ENCODE measurements at regions of chr17 and their contacts with region 1.

Region 1: DNA sequence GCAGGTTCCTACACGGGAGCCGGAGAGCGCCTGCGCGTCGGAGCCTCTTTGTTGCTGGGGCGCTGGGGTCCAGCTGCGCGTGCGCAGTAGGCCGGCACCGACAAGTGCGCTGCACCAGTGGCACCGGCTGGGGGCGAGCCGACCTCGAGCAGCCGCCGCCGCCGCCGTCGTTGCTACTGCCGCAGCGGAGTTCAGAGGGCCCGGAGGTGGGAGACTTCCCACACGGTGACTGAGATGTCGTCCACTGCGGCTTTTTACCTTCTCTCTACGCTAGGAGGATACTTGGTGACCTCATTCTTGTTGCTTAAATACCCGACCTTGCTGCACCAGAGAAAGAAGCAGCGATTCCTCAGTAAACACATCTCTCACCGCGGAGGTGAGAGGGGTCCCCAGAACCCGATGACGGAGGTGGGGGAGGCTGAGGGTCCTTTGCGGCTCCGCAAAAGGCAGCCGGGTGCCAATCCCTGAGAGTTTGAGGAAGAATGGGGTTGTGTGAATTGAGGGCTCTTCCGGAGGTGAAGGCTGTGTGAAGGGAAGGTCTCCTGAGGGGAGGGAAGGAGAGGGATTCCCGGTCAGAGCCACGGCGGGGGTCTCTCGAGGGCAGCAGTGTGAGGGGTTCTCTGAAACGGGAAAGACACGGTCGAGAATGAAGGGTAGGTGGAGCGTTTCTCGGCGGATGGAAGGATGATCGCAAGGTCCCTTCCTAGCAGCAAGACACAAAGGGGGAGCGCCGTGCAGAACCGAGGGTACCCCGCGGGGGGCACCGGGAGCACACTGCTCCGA is at the start of gene GDPD1:
- DNase-seq: peak; percentile 89 to 99 (median 97)
- ATAC-seq: peak; percentile 97 to 100 (median 99)
- H3K4me3 ChIP-seq: peak within 1 kb of the TSS; percentile 93 to 96
- H3K4me3 Mint-ChIP-seq: peak within 1 kb of the TSS; percentile 99 to 100 (median 99)
- H3K27ac ChIP-seq: peak within 1 kb of the TSS; percentile 82
- H3K27ac Mint-ChIP-seq: peak within 1 kb of the TSS; percentile 97 to 98
- H3K4me1 ChIP-seq: peaks cover 8 to 9% of the 10 kb centered on the region in 2 experiments
- H3K4me1 Mint-ChIP-seq: peaks cover 13 to 16% (median 15%) of the 10 kb centered on the region in 3 donors
- H3K27me3 ChIP-seq: peaks cover 0 to 3% of the 10 kb centered on the region in 2 experiments
- H3K27me3 Mint-ChIP-seq: no peaks in the 10 kb centered on the region
- total RNA-seq, gene GDPD1: 2.4 to 4.9 (median 3.1) TPM

Region 2: DNA sequence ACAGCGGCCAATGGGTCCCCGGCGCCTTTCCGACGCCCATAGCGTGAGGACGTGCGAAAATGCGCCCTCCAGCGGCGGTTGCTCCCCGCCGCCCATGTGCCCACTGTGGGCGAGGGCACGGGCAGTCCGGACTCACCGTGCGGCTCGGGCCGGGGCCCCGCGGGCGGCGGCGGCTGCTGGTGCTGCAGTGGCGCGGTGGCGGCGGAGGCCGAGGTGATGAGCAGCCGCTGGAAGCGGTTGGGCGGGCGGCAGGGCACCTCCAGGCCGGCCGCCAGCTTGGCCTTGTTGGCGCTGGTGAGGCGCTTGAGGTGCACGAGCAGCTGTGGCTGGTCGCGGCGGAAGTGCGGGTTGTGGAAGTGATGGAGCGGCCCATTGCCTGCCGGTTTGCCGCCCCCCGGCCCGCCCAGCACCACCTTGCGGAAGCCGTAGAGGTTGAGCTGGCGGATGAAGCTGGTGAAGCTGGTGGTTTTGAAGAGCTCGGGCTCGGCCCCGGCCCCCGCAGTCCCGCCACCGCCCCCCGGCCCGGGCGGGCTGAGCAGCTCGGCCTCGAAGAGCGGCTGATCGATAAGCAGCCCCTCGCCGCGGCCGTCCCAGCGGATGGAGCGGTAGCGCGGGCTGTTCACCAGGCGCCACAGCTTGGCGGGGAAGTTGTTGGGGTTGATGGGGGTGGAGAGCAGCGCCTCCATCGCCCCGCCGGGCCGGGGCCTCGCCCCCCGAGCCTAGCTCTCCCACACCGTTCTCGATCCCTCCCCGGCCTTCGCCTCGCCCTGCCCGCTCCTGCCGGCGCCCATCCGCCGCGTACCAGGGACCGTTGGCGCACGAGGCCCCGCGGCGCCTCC is 732.8 kb before region 1 on chr17 and contains the start of gene HSF5:
- CTCF ChIA-PET with region 1: interaction called in 1 of 2 experiments, 11 read pairs
- POLR2A ChIA-PET with region 1: no interaction called
- DNase-seq: peak; percentile 58 to 86 (median 74)
- ATAC-seq: peak; percentile 95 to 97 (median 96)
- H3K4me3 ChIP-seq: peak within 1 kb of the TSS; percentile 25 to 47
- H3K4me3 Mint-ChIP-seq: peak within 1 kb of the TSS; percentile 55 to 73 (median 64)
- H3K27ac ChIP-seq: peak within 1 kb of the TSS; percentile 3
- H3K27ac Mint-ChIP-seq: peak within 1 kb of the TSS; percentile 49 to 75
- H3K4me1 ChIP-seq: peaks cover 0 to 11% of the 10 kb centered on the region in 2 experiments
- H3K4me1 Mint-ChIP-seq: peaks cover 0 to 20% (median 18%) of the 10 kb centered on the region in 3 donors
- H3K27me3 ChIP-seq: no peaks in the 10 kb centered on the region
- H3K27me3 Mint-ChIP-seq: no peaks in the 10 kb centered on the region
- total RNA-seq, gene HSF5: 1.7 to 2.8 (median 2.5) TPM

Region 3: DNA sequence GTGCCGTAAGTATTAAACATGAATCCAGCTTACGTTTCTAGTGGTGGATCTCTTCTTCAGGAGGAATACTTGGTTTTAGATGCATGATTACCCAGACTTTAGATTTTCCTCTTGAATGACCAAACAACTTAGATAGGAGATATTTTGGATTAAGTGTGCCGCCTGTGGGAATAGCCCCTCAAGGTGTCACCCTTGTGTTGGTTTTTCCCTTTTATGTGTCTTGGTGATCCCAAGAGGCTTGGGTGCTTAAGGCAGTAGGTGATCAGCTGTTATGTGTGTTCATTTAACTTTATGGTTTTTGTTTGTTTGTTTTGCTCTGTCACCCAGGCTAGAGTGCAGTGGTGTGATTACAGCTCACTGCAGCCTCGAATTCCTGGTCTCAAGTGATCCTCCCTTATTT is 349.8 kb before region 1 on chr17:
- CTCF ChIA-PET with region 1: no interaction called
- POLR2A ChIA-PET with region 1: no interaction called
- DNase-seq: no peak
- ATAC-seq: no peak
- H3K4me3 ChIP-seq: no peak overlapping the region
- H3K4me3 Mint-ChIP-seq: no peak overlapping the region
- H3K27ac ChIP-seq: no peak overlapping the region
- H3K27ac Mint-ChIP-seq: no peak overlapping the region
- H3K4me1 ChIP-seq: no peaks in the 10 kb centered on the region
- H3K4me1 Mint-ChIP-seq: no peaks in the 10 kb centered on the region
- H3K27me3 ChIP-seq: peaks cover 2% of the 10 kb centered on the region in 2 experiments
- H3K27me3 Mint-ChIP-seq: peaks cover 5 to 7% of the 10 kb centered on the region in 2 donors

Region 4: GRCh38 chr17:59084154-59084553 is 136.4 kb before region 1 on chr17:
- CTCF ChIA-PET with region 1: no interaction called
- POLR2A ChIA-PET with region 1: no interaction called
- DNase-seq: no peak
- ATAC-seq: no peak
- H3K4me3 ChIP-seq: no peak overlapping the region
- H3K4me3 Mint-ChIP-seq: no peak overlapping the region
- H3K27ac ChIP-seq: no peak overlapping the region
- H3K27ac Mint-ChIP-seq: no peak overlapping the region
- H3K4me1 ChIP-seq: no peaks in the 10 kb centered on the region
- H3K4me1 Mint-ChIP-seq: peaks cover 4 to 6% (median 5%) of the 10 kb centered on the region in 3 donors
- H3K27me3 ChIP-seq: no peaks in the 10 kb centered on the region
- H3K27me3 Mint-ChIP-seq: no peaks in the 10 kb centered on the region

Region 5: GRCh38 chr17:59244081-59244480 is 23.5 kb after region 1 on chr17:
- CTCF ChIA-PET with region 1: no interaction called
- POLR2A ChIA-PET with region 1: interaction called in 1 of 2 experiments, 13 read pairs
- DNase-seq: no peak
- ATAC-seq: no peak
- H3K4me3 ChIP-seq: no peak overlapping the region
- H3K4me3 Mint-ChIP-seq: no peak overlapping the region
- H3K27ac ChIP-seq: no peak overlapping the region
- H3K27ac Mint-ChIP-seq: no peak overlapping the region
- H3K4me1 ChIP-seq: no peaks in the 10 kb centered on the region
- H3K4me1 Mint-ChIP-seq: no peaks in the 10 kb centered on the region
- H3K27me3 ChIP-seq: no peaks in the 10 kb centered on the region
- H3K27me3 Mint-ChIP-seq: no peaks in the 10 kb centered on the region

Measured in T-cell (primary cell).